PC-3 (cell line): ENCODE measurements at regions of chr10 and their contacts with region 1.

Region 1: GRCh38 chr10:12909836-12910185 is 91.7 kb downstream of the CCDC3 start:
- DNase-seq: peak; percentile 60
- ATAC-seq: peak; percentile 91
- H3K4me3 ChIP-seq: no peak overlapping the region
- H3K27ac ChIP-seq: no peak overlapping the region
- H3K4me1 ChIP-seq: peaks cover 18% of the 10 kb centered on the region
- H3K27me3 ChIP-seq: no peaks in the 10 kb centered on the region
- CTCF ChIP-seq: no peak

Region 2: GRCh38 chr10:12960334-12960898 is 50.6 kb after region 1 on chr10:
- CTCF ChIA-PET with region 1: no interaction called
- POLR2A ChIA-PET with region 1: no interaction called
- intact Hi-C with region 1: loop called (anchors 10 kb)
- DNase-seq: no peak
- ATAC-seq: no peak
- H3K4me3 ChIP-seq: no peak overlapping the region
- H3K27ac ChIP-seq: no peak overlapping the region
- H3K4me1 ChIP-seq: peaks cover 4% of the 10 kb centered on the region
- H3K27me3 ChIP-seq: no peaks in the 10 kb centered on the region
- CTCF ChIP-seq: no peak

Region 3: GRCh38 chr10:12975266-12975665 is 65.5 kb after region 1 on chr10:
- CTCF ChIA-PET with region 1: no interaction called
- POLR2A ChIA-PET with region 1: no interaction called
- intact Hi-C with region 1: no loop called
- DNase-seq: peak; percentile 42
- ATAC-seq: peak; percentile 49
- H3K4me3 ChIP-seq: no peak overlapping the region
- H3K27ac ChIP-seq: no peak overlapping the region
- H3K4me1 ChIP-seq: no peaks in the 10 kb centered on the region
- H3K27me3 ChIP-seq: no peaks in the 10 kb centered on the region
- CTCF ChIP-seq: peak; percentile 50

Region 4: DNA sequence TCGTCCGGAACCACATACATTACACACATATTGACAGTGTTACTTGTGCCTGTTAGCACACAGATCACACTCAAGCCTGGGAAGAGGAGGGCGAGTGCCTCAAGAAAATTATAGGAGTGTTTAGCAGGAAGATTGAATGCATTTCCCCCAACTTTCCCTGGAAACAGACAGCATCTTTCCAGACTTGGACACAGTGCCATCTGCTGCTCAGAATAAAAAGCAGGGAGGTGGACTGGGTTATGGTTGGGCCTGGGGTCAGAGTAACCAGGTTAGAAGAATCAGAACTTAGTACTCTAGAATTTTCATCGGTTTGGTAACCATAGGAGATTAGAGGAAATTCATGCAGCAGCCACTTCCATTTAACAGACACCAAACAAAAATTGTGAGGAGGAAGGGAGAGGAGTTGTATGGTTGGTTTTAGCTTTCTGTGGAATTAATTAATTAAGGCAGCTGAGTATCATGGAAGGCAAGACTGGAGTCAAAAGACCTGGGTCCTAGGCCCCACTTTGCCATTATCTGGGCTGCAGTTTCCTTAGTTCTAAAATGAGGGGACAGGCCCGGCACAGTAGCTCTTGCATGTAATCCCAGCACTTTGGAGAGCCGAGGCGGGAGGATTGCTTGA is 146.8 kb after region 1 on chr10:
- CTCF ChIA-PET with region 1: no interaction called
- POLR2A ChIA-PET with region 1: no interaction called
- intact Hi-C with region 1: loop called (anchors 10 kb)
- DNase-seq: peak; percentile 47
- ATAC-seq: peak; percentile 48
- H3K4me3 ChIP-seq: no peak overlapping the region
- H3K27ac ChIP-seq: no peak overlapping the region
- H3K4me1 ChIP-seq: no peaks in the 10 kb centered on the region
- H3K27me3 ChIP-seq: no peaks in the 10 kb centered on the region
- CTCF ChIP-seq: peak; percentile 57

Region 5: GRCh38 chr10:13087986-13088618 is 178.3 kb after region 1 on chr10:
- CTCF ChIA-PET with region 1: no interaction called
- POLR2A ChIA-PET with region 1: no interaction called
- intact Hi-C with region 1: no loop called
- DNase-seq: peak; percentile 55
- ATAC-seq: peak; percentile 89
- H3K4me3 ChIP-seq: no peak overlapping the region
- H3K27ac ChIP-seq: peak overlapping the region; percentile 56
- H3K4me1 ChIP-seq: peaks cover 6% of the 10 kb centered on the region; the same call in 1 of the 2 replicates
- H3K27me3 ChIP-seq: no peaks in the 10 kb centered on the region
- CTCF ChIP-seq: no peak